H1 (cell line): ENCODE measurements at regions of chr15 and their contacts with region 1.

Region 1: DNA sequence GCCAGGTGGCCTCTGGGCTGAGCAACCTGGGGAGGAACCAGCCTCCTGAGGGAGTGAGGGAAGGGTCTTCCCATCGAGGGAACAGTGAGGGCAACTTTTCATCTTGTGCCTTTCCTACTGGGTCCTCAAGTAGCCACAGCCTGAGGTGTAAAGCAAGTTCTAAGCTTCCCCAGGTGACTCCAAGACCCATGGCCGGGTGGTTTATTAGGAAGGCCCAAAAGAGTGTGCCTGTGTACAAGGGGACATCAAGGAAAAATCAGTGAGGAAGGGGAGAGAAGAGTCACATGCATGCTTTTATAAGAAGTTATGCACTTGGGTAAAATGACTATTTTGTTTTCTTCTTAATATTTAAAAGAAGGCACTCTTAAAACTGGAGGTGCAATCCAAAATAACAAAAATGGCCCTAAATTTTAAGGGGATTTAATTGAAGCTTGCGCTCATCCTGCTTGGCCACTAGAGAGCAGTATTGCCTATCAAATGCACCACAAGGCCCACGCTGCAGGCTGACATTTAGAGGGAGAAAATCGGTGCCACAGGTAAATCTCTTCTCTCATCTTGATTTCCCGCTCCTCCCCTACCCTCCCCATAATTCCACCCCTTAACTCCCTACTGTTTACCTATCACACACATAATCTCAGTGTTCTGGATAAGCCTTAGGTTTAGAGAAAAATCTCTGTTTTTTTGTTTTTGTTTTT is 6.7 kb downstream of the NANOGP8 start:
- DNase-seq: no peak
- H3K4me3 ChIP-seq: no peak overlapping the region
- H3K27ac ChIP-seq: 0 out of 2 replicates have a peak overlapping the region, but pooled peaks have one; percentile 4
- H3K4me1 ChIP-seq: no peaks in the 10 kb centered on the region
- H3K27me3 ChIP-seq: no peaks in the 10 kb centered on the region; a peak in 1 of 7 replicates
- CTCF ChIP-seq: peak; percentile 53 to 86 (median 82)
- EP300 ChIP-seq: no peak
- POLR2A ChIP-seq: no peak
- RAD21 ChIP-seq: peak; percentile 98 to 99

Region 2: DNA sequence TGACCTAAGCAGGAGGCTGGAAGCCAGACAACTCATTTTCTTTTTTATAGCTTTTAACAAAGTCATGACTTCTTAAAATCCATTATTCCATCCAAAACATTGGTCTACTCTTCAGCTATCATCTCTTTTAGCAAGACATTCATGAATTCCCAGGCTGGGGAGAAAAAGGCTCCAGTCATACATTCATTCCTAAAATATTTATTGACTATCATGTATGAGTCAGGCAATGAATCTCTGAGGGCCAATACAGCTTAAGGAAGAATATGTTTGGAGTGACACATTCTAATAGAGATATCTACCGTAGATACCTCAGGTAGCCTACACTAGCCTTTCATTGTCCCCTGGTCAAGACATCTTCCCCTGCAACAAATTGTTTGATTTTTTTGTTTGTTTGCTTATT is 203.1 kb after region 1 on chr15:
- CTCF ChIA-PET with region 1: interaction called, 10 read pairs
- POLR2A ChIA-PET with region 1: no interaction called
- DNase-seq: no peak
- H3K4me3 ChIP-seq: no peak overlapping the region
- H3K27ac ChIP-seq: no peak overlapping the region
- H3K4me1 ChIP-seq: no peaks in the 10 kb centered on the region
- H3K27me3 ChIP-seq: no peaks in the 10 kb centered on the region
- CTCF ChIP-seq: no peak
- EP300 ChIP-seq: no peak
- POLR2A ChIP-seq: no peak
- RAD21 ChIP-seq: no peak

Region 3: DNA sequence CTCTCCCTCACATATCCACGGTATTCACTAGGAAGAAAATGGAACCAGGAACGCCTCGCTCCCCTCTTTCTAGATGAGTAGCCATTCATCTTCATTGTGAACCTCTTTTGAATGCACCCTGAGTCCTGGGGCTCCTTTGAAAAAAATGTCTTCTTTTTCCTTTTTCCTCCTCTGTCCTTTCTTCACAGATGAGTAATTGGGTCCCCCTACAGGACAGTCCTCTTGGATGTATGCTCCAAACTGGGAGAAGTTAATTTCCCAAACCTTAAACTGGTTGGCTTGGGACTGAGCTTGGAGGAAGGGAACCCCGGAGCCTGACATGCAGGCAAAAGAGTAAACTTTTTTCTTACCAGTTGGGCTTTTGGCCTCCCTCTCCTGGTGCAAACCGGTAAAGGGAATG is 358.8 kb after region 1 on chr15:
- CTCF ChIA-PET with region 1: interaction called, 22 read pairs
- POLR2A ChIA-PET with region 1: no interaction called
- DNase-seq: no peak
- H3K4me3 ChIP-seq: no peak overlapping the region
- H3K27ac ChIP-seq: no peak overlapping the region; the same call in 1 of the 2 replicates
- H3K4me1 ChIP-seq: peaks cover 0 to 8% (median 4%) of the 10 kb centered on the region in 4 experiments; a peak in 3 of 7 replicates
- H3K27me3 ChIP-seq: no peaks in the 10 kb centered on the region
- CTCF ChIP-seq: peak in 2 of 3 experiments; percentile 14 to 28; a peak in 1 of 4 replicates
- EP300 ChIP-seq: no peak
- POLR2A ChIP-seq: no peak
- RAD21 ChIP-seq: peak; percentile 48 to 59

Region 4: GRCh38 chr15:35657679-35658311 is 579.4 kb after region 1 on chr15:
- CTCF ChIA-PET with region 1: no interaction called
- POLR2A ChIA-PET with region 1: no interaction called
- DNase-seq: no peak
- H3K4me3 ChIP-seq: no peak overlapping the region
- H3K27ac ChIP-seq: no peak overlapping the region
- H3K4me1 ChIP-seq: no peaks in the 10 kb centered on the region
- H3K27me3 ChIP-seq: no peaks in the 10 kb centered on the region
- CTCF ChIP-seq: no peak
- EP300 ChIP-seq: no peak
- POLR2A ChIP-seq: no peak
- RAD21 ChIP-seq: no peak